GM12878 (cell line): ENCODE measurements at regions of chr5 and their contacts with region 1.

Region 1: GRCh38 chr5:59174248-59174844 is 591.5 kb downstream of the RAB3C start:
- DNase-seq: no peak
- ATAC-seq: peak; percentile 83
- H3K4me3 ChIP-seq: no peak overlapping the region
- H3K27ac ChIP-seq: no peak overlapping the region
- H3K4me1 ChIP-seq: peaks cover 16% of the 10 kb centered on the region
- H3K27me3 ChIP-seq: no peaks in the 10 kb centered on the region
- CTCF ChIP-seq: peak; percentile 57 to 73 (median 70)
- EP300 ChIP-seq: no peak
- POLR2A ChIP-seq: no peak
- RAD21 ChIP-seq: peak; percentile 84

Region 2: DNA sequence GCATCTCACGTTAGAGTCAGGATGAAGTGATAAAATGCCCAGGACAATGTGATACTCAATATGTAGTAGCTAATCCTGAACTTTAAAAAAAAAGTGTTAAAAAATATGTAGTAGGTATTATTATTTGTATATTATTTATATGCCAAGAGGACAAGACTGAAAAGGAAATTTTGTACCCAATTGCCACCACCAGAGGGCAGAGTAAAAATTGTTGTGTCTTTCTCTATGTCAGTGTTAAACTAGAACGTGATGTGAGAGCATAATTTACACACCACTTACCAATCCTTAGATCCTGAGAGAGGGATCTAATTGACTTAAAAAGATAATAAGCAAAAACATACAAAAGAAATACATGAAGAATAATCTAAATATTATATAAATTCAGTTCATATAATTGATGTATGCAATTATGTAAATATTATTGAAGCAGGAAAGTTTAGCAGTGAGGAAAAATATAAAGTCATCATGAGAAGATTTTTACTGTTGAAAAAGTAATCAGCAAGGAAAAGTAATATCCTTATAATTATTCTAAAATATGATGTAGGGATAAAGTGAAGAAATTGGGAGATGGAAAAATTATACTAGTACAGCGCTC is 302.6 kb before region 1 on chr5:
- CTCF ChIA-PET with region 1: interaction called, 14 read pairs
- POLR2A ChIA-PET with region 1: no interaction called
- RAD21 ChIA-PET with region 1: no interaction called
- SMC1A ChIA-PET with region 1: no interaction called
- in situ Hi-C with region 1: no loop called
- intact Hi-C with region 1: loop called (anchors 5 kb)
- DNase-seq: no peak
- ATAC-seq: peak; percentile 79
- H3K4me3 ChIP-seq: no peak overlapping the region
- H3K27ac ChIP-seq: no peak overlapping the region
- H3K4me1 ChIP-seq: no peaks in the 10 kb centered on the region
- H3K27me3 ChIP-seq: no peaks in the 10 kb centered on the region
- CTCF ChIP-seq: peak; percentile 46 to 53 (median 49); a peak in 5 of 6 replicates
- EP300 ChIP-seq: no peak
- POLR2A ChIP-seq: no peak
- RAD21 ChIP-seq: peak; percentile 33

Region 3: DNA sequence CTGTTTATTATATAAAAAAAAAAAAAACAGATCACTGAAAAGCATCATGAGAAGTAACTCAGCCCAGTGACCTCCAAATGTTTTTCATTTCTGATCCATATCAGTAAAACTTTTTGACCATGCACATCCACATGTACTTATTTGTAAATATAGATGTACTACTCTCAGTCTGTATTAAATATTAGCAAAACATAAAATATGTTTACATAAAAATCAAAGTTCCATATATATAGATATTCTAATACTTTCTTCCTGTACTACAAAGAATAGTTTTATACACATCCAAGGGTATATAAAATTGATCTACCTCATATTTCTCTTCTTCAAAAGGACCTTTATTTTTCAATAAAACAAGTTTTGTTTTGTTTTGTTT is 282.4 kb before region 1 on chr5:
- CTCF ChIA-PET with region 1: interaction called, 33 read pairs
- POLR2A ChIA-PET with region 1: interaction called, 4 read pairs
- RAD21 ChIA-PET with region 1: interaction called, 13 read pairs
- SMC1A ChIA-PET with region 1: interaction called, 33 read pairs
- in situ Hi-C with region 1: no loop called
- intact Hi-C with region 1: loop called (anchors 1 kb)
- DNase-seq: no peak
- ATAC-seq: no peak
- H3K4me3 ChIP-seq: no peak overlapping the region
- H3K27ac ChIP-seq: no peak overlapping the region
- H3K4me1 ChIP-seq: no peaks in the 10 kb centered on the region
- H3K27me3 ChIP-seq: no peaks in the 10 kb centered on the region; a peak in 1 of 4 replicates
- CTCF ChIP-seq: no peak
- EP300 ChIP-seq: no peak
- POLR2A ChIP-seq: no peak
- RAD21 ChIP-seq: no peak

Region 4: GRCh38 chr5:59034498-59035186 is 139.7 kb before region 1 on chr5:
- CTCF ChIA-PET with region 1: interaction called, 115 read pairs
- POLR2A ChIA-PET with region 1: no interaction called
- RAD21 ChIA-PET with region 1: interaction called, 41 read pairs
- SMC1A ChIA-PET with region 1: interaction called, 56 read pairs
- in situ Hi-C with region 1: no loop called
- intact Hi-C with region 1: loop called (anchors 2 kb)
- DNase-seq: no peak
- ATAC-seq: peak; percentile 70
- H3K4me3 ChIP-seq: no peak overlapping the region
- H3K27ac ChIP-seq: no peak overlapping the region
- H3K4me1 ChIP-seq: peaks cover 5% of the 10 kb centered on the region; the same call in 1 of the 2 replicates
- H3K27me3 ChIP-seq: peaks cover 7 to 21% of the 10 kb centered on the region in 2 experiments
- CTCF ChIP-seq: peak; percentile 45 to 64 (median 56)
- EP300 ChIP-seq: no peak
- POLR2A ChIP-seq: no peak
- RAD21 ChIP-seq: peak; percentile 59

Region 5: GRCh38 chr5:59126708-59127573 is 47.4 kb before region 1 on chr5:
- CTCF ChIA-PET with region 1: interaction called, 5 read pairs
- POLR2A ChIA-PET with region 1: no interaction called
- RAD21 ChIA-PET with region 1: interaction called, 10 read pairs
- SMC1A ChIA-PET with region 1: interaction called, 6 read pairs
- in situ Hi-C with region 1: no loop called
- intact Hi-C with region 1: loop called (anchors 2 kb)
- DNase-seq: no peak
- ATAC-seq: no peak
- H3K4me3 ChIP-seq: no peak overlapping the region; the same call in 1 of the 2 replicates
- H3K27ac ChIP-seq: no peak overlapping the region
- H3K4me1 ChIP-seq: no peaks in the 10 kb centered on the region; the same call in 1 of the 2 replicates
- H3K27me3 ChIP-seq: no peaks in the 10 kb centered on the region; a peak in 1 of 4 replicates
- CTCF ChIP-seq: no peak
- EP300 ChIP-seq: no peak
- POLR2A ChIP-seq: no peak
- RAD21 ChIP-seq: no peak

Region 6: DNA sequence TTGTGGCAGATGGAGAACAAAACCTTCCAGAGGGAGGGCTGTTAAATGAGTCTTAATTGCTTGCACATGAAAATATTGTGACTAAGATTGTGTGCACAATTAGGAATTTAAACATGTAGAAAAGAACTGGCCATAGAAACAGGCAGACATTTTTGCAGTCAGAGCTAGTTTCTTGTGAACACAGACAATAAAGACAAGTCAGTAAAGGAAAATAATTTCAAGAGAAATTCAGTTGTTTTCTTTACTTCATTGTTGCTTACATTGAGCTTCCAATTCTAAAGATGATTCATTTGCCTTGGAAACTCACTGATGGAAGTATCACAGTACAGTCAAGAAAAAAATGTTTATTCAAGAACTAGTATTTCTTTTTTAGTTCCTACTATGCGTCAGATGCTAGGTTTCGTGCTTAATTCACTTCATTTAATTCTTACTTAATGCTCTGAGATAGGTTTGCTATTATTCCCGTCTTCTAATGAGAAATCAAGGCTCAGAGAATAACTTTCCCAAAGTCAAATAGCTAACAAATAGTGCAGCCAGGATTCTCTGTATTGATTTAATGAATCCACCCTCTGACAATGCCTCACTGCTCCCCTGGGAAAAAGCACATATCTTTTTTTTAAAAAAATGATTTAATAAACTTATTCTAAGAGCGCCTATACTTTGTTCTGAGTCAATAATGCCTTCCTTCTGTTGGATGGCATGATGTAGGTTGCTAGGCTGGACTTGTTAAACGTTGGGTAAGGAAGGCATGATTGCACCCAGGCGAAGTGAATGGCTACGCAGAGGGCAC is 10.1 kb before region 1 on chr5:
- CTCF ChIA-PET with region 1: interaction called, 13 read pairs
- POLR2A ChIA-PET with region 1: no interaction called
- RAD21 ChIA-PET with region 1: no interaction called
- SMC1A ChIA-PET with region 1: interaction called, 3 read pairs
- in situ Hi-C with region 1: no loop called
- intact Hi-C with region 1: no loop called
- DNase-seq: no peak
- ATAC-seq: no peak
- H3K4me3 ChIP-seq: no peak overlapping the region
- H3K27ac ChIP-seq: no peak overlapping the region
- H3K4me1 ChIP-seq: no peaks in the 10 kb centered on the region
- H3K27me3 ChIP-seq: no peaks in the 10 kb centered on the region; a peak in 1 of 4 replicates
- CTCF ChIP-seq: no peak
- EP300 ChIP-seq: no peak
- POLR2A ChIP-seq: no peak
- RAD21 ChIP-seq: no peak